Left cardiac atrium (tissue), 4 donors: ENCODE measurements at regions of chr5 and their contacts with region 1.

Region 1: GRCh38 chr5:109347252-109347888 is 62.4 kb downstream of the PJA2 start:
- DNase-seq: no peak
- ATAC-seq: peak; percentile 44 to 47

Region 2: DNA sequence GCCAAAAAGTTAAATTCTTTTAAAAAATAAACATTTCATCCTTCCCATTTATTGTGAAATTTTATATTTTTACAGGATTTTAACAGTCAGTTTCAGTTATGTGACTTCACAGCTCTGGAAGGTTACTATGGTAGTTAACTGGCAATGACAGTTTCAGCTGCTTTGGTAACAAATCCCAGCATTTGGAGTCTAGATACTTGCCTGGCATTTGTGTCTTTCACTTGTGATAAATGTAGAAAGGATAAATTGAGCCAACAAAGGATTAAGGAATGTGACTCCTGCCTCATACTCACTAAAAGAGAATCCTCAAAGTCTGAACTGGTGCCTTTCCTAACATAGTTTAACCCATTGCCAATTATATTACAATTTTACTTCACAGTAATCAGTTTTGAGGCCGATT is 284.1 kb before region 1 on chr5:
- intact Hi-C with region 1: no loop called
- DNase-seq: no peak
- ATAC-seq: no peak

Region 3: GRCh38 chr5:109125755-109126429 is 221.5 kb before region 1 on chr5:
- intact Hi-C with region 1: no loop called
- DNase-seq: no peak
- ATAC-seq: no peak

Region 4: DNA sequence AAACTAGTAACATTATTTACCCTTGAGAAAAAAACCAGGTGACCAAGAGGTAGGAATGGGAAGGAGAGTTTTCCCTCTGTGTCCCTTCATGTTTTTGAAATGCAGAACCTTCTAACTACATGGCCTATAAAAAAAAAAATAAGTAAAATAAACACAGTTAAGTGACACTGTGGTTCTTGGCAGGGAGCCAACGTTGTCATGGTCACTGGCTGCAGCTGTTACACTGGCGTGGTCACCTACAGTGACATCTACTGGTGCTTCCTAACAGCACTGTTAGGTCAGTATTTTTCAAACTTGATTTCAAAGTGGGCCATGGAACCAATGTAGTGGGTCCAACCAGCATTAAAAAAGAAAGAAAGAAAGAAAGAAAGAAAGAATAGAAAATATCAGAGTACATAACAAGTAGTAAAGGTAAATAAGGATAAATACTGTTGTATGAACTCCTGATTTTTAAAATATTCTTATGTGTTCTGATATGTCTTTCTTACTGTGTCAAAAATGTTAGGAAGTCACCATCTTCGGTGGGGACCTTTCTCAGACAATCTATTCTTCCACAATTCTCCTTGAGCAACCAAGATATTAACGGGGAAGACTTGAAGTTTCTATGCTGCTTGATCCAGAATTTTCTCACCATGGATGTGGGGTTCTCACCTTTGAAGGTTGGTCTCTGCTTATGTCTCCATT is 121.5 kb after region 1 on chr5:
- intact Hi-C with region 1: loop called in 1 of 2 experiments (anchors 5 kb)
- DNase-seq: peak; percentile 97
- ATAC-seq: peak; percentile 95 to 98